Mammary epithelial cell (primary cell): ENCODE measurements at regions of chr1 and their contacts with region 1.

Region 1: GRCh38 chr1:87226341-87226760 is 102.3 kb upstream of the LMO4 start:
- DNase-seq: peak; percentile 99
- H3K4me3 ChIP-seq: no peak overlapping the region
- H3K27ac ChIP-seq: peak overlapping the region; percentile 77
- H3K4me1 ChIP-seq: peaks cover 27% of the 10 kb centered on the region
- H3K27me3 ChIP-seq: no peaks in the 10 kb centered on the region
- CTCF ChIP-seq: no peak

Region 2: DNA sequence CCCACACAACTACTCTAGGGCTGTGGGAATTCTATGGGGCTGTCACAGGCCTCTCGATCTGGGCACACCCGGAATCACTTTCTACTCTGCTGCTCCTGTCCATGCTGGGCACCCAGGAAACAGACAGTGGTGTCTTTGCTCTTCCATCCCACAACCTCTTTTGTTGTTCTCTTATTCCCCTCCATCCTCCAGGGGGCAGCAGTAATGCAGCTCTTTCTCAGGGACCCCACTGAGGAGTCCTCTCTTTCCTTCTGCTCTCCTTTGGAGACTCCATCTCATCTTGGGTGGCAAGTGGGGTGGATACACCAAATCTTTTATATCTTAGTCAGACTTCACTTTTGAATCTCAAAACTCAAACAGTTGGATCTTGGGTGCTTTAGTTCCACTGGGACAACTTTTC is 105.6 kb before region 1 on chr1:
- CTCF ChIA-PET with region 1: no interaction called
- dilution Hi-C with region 1: loop called (anchors 5 kb)
- in situ Hi-C with region 1: no loop called
- intact Hi-C with region 1: no loop called
- DNase-seq: no peak
- H3K4me3 ChIP-seq: no peak overlapping the region
- H3K27ac ChIP-seq: no peak overlapping the region
- H3K4me1 ChIP-seq: peaks cover 22% of the 10 kb centered on the region
- H3K27me3 ChIP-seq: no peaks in the 10 kb centered on the region
- CTCF ChIP-seq: peak in 1 of 2 donors; percentile 10

Region 3: DNA sequence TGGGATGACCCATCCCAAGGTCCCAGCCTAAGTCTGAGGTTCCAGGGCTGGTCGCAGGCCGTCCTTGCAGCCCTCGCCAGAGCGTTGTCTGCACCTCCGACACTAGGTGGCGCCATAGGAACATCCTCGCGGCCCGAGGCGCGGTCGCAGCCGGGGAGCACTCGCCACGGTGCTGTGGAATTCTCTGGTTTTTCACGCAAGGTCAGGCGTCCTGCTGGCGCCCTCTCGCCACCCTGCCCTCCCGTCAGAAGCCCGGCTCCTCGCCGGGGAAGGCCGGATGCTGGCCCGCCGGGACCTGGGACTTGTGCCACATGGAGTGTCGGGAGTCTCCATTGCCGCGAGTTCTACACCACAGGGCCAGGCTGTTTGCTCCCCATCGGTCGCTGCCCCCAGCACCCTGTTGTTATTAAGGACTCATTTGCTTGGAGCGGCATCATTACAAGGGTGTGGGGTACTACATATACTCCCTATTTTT is 94.5 kb before region 1 on chr1:
- CTCF ChIA-PET with region 1: no interaction called
- dilution Hi-C with region 1: no loop called
- in situ Hi-C with region 1: no loop called
- intact Hi-C with region 1: loop called (anchors 5 kb)
- DNase-seq: peak; percentile 54
- H3K4me3 ChIP-seq: peak overlapping the region; percentile 4 to 63 (median 40)
- H3K27ac ChIP-seq: no peak overlapping the region
- H3K4me1 ChIP-seq: peaks cover 23% of the 10 kb centered on the region
- H3K27me3 ChIP-seq: no peaks in the 10 kb centered on the region
- CTCF ChIP-seq: peak; percentile 82 to 97

Region 4: DNA sequence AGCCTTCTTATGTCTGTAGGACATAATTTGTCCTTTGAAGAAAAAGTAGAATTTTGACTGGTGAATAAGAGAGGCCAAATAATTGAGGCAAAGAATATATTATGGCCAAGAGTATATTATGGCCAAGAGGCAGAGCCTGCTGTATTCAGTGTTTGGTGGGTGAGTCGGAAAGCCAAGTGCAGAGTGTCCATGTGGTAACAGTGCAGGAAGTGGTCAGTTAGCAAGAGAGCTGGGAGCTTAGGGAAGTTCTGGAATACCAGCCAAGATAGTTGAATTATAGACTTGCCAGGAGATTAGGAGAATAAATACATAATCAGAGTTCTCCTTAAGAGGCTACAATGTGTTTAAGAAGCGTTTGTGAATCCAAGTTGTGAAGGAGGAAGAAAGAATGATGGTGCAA is 29.2 kb before region 1 on chr1:
- CTCF ChIA-PET with region 1: no interaction called
- dilution Hi-C with region 1: no loop called
- in situ Hi-C with region 1: no loop called
- intact Hi-C with region 1: no loop called
- DNase-seq: peak; percentile 26
- H3K4me3 ChIP-seq: no peak overlapping the region
- H3K27ac ChIP-seq: no peak overlapping the region
- H3K4me1 ChIP-seq: no peaks in the 10 kb centered on the region
- H3K27me3 ChIP-seq: no peaks in the 10 kb centered on the region
- CTCF ChIP-seq: no peak

Region 5: GRCh38 chr1:87249803-87250202 is 23.5 kb after region 1 on chr1:
- CTCF ChIA-PET with region 1: no interaction called
- dilution Hi-C with region 1: no loop called
- in situ Hi-C with region 1: no loop called
- intact Hi-C with region 1: loop called (anchors 1 kb)
- DNase-seq: peak; percentile 81
- H3K4me3 ChIP-seq: no peak overlapping the region
- H3K27ac ChIP-seq: no peak overlapping the region
- H3K4me1 ChIP-seq: peaks cover 10% of the 10 kb centered on the region
- H3K27me3 ChIP-seq: no peaks in the 10 kb centered on the region
- CTCF ChIP-seq: no peak